HCT116 (cell line): ENCODE measurements at regions of chr20 and their contacts with region 1.

Region 1: DNA sequence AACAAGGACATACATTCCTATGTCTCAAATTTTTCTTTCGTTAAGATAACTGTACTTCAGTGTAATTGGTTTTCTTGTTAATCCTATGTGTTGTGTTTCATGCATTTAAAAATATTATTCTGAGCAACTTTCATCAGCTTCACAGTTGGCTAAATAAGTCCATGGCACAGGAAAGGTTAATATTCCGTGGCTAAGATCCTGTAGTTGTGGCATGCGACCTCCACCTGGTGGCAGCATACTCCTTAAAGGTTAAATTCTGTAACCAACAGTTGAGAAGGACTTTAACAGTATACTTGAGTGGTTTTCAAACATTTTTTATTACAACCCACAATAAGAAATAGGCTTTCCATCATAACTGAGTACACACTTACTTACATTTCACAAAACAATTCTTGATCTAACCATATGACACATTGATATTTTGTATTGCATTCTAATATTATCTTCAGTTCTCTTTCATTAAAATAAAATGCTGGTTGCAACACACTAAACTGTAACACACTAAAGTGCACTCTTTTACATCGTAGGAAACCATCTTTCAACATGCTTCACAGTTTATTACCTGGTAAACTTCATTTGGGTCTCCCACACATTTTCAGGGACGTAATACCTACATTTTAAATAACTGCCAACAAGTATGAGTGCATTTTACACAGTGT is 118.3 kb downstream of the SLX4IP start:
- DNase-seq: no peak
- ATAC-seq: peak; percentile 84
- H3K4me3 ChIP-seq: no peak overlapping the region
- H3K27ac ChIP-seq: no peak overlapping the region
- H3K4me1 ChIP-seq: peaks cover 56 to 60% of the 10 kb centered on the region in 2 experiments
- H3K27me3 ChIP-seq: no peaks in the 10 kb centered on the region
- CTCF ChIP-seq: peak; percentile 60 to 88 (median 80); a peak in 5 of 6 replicates
- POLR2A ChIP-seq: no peak
- RAD21 ChIP-seq: peak; percentile 90

Region 2: GRCh38 chr20:10647465-10647864 is 94.0 kb after region 1 on chr20:
- CTCF ChIA-PET with region 1: no interaction called
- POLR2A ChIA-PET with region 1: no interaction called
- RAD21 ChIA-PET with region 1: no interaction called
- intact Hi-C with region 1: loop called (anchors 10 kb)
- DNase-seq: no peak
- ATAC-seq: peak; percentile 54; the same call in 1 of the 2 replicates
- H3K4me3 ChIP-seq: no peak overlapping the region
- H3K27ac ChIP-seq: no peak overlapping the region
- H3K4me1 ChIP-seq: no peaks in the 10 kb centered on the region
- H3K27me3 ChIP-seq: no peaks in the 10 kb centered on the region
- CTCF ChIP-seq: peak; percentile 13 to 52 (median 48); a peak in 5 of 6 replicates
- POLR2A ChIP-seq: no peak
- RAD21 ChIP-seq: peak; percentile 41